Right ventricle myocardium superior (tissue), 1 donor: ENCODE measurements at regions of chr2 and their contacts with region 1.

Region 1: DNA sequence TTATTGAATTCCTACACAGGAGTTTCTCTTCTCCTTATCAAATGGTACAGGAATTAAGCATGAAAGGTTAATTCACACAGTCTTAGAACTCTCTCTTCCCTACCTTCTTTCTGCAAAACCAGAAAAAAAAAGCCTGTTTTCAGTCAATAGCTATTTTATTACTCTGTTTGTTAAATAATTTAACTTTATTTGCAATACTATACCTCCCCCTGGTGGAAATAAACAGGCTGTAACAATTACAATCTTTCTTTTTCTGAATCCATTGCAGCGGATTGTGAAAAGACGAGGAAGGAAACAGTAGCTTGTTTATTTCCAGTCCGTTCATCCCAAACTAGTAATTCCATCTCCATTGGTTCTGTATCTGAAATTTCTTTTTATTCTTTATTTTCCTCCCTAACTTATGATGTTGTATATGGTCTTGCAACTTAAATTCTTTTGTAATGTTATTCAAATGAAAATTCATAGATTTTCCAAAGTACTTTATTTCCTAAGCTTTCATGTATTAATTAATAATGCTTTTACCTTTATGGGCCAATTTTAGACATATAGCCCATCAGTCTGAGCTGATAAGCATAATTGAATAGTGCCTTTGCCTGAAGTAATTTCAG is 165.2 kb downstream of the SH3BP4 start:
- DNase-seq: no peak
- ATAC-seq: no peak

Region 2: GRCh38 chr2:234550511-234551107 is 566.4 kb before region 1 on chr2:
- intact Hi-C with region 1: loop called (anchors 2 kb)
- DNase-seq: peak; percentile 51
- ATAC-seq: peak; percentile 83

Region 3: GRCh38 chr2:235324324-235324723 is 207.3 kb after region 1 on chr2:
- intact Hi-C with region 1: no loop called
- DNase-seq: no peak
- ATAC-seq: no peak